CD4-positive, alpha-beta T cell (primary cell): ENCODE measurements at regions of chr9 and their contacts with region 1.

Region 1: GRCh38 chr9:6757456-6758247 is at the start of gene KDM4C:
- DNase-seq: peak; percentile 87 to 98 (median 94)
- ATAC-seq: peak; percentile 70
- H3K4me3 ChIP-seq: peak within 1 kb of the TSS; percentile 90
- H3K4me3 Mint-ChIP-seq: peak within 1 kb of the TSS; percentile 96
- H3K27ac ChIP-seq: peak within 1 kb of the TSS; percentile 96 to 99
- H3K27ac Mint-ChIP-seq: peak within 1 kb of the TSS; percentile 96
- H3K4me1 ChIP-seq: peaks cover 26% of the 10 kb centered on the region
- H3K4me1 Mint-ChIP-seq: peaks cover 25% of the 10 kb centered on the region
- H3K27me3 ChIP-seq: no peaks in the 10 kb centered on the region
- H3K27me3 Mint-ChIP-seq: no peaks in the 10 kb centered on the region
- CTCF ChIP-seq: no peak
- total RNA-seq, gene KDM4C: 60.1 to 61.3 TPM

Region 2: GRCh38 chr9:6645355-6646292 is 112.0 kb before region 1 on chr9 and contains the start of gene GLDC:
- CTCF ChIA-PET with region 1: no interaction called
- POLR2A ChIA-PET with region 1: interaction called, 13 read pairs
- intact Hi-C with region 1: no loop called
- DNase-seq: peak in 12 of 14 experiments; percentile 3 to 64 (median 33)
- ATAC-seq: peak; percentile 68
- H3K4me3 ChIP-seq: peak within 1 kb of the TSS; percentile 66
- H3K4me3 Mint-ChIP-seq: peak within 1 kb of the TSS; percentile 87
- H3K27ac ChIP-seq: no peak within 1 kb of the TSS
- H3K27ac Mint-ChIP-seq: no peak within 1 kb of the TSS
- H3K4me1 ChIP-seq: peaks cover 24% of the 10 kb centered on the region
- H3K4me1 Mint-ChIP-seq: peaks cover 22% of the 10 kb centered on the region
- H3K27me3 ChIP-seq: peaks cover 34 to 41% of the 10 kb centered on the region in 2 experiments
- H3K27me3 Mint-ChIP-seq: peaks cover 68% of the 10 kb centered on the region
- CTCF ChIP-seq: no peak
- total RNA-seq, gene GLDC: not detected

Region 3: GRCh38 chr9:6703898-6704639 is 53.6 kb before region 1 on chr9:
- CTCF ChIA-PET with region 1: interaction called, 3 read pairs
- POLR2A ChIA-PET with region 1: interaction called, 137 read pairs
- intact Hi-C with region 1: loop called (anchors 2 to 5 kb)
- DNase-seq: peak; percentile 72 to 94 (median 81)
- ATAC-seq: peak; percentile 85
- H3K4me3 ChIP-seq: peak overlapping the region; percentile 67
- H3K4me3 Mint-ChIP-seq: peak overlapping the region; percentile 92
- H3K27ac ChIP-seq: peak overlapping the region; percentile 90 to 92
- H3K27ac Mint-ChIP-seq: peak overlapping the region; percentile 91
- H3K4me1 ChIP-seq: peaks cover 16% of the 10 kb centered on the region
- H3K4me1 Mint-ChIP-seq: peaks cover 18% of the 10 kb centered on the region
- H3K27me3 ChIP-seq: no peaks in the 10 kb centered on the region
- H3K27me3 Mint-ChIP-seq: no peaks in the 10 kb centered on the region
- CTCF ChIP-seq: no peak

Region 4: DNA sequence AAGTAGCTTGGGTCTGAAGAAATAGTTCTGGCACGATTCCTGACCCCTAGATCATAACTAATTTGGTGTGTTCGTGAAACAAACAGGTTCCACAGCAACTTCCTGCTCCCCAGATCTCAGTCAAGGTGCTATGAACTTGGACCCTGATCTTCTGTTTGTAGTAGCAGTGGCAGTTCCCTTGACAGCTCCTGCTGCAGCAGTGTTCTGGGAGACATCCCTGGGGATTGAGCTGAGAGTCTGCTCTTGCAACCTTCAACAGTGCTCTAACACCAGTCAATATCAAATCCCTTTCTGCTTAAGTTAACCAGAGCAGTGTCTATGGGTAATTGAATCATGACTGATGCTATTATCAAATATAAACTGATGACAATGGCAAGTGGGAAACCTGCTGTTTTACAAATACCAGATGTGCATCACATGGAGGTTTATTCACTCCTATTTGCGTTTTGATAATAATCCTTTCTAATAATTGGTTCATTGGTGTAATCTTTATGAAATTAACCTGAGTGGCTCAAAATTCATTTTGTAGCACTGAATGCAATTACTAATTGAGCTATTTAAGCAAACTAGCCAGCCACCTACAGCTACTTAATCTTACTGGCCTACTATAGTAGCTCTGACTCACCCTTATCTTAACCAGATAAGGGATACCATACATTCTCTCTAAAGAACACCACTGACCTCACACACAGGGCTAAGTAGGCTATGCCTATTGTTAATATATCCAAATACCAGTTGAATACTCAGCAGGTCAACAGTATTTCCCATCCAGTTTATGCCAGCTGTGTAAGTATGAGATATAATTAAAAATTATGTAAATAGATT is 22.0 kb after region 1 on chr9:
- CTCF ChIA-PET with region 1: interaction called, 3 read pairs
- POLR2A ChIA-PET with region 1: interaction called, 60 read pairs
- intact Hi-C with region 1: no loop called
- DNase-seq: no peak
- ATAC-seq: no peak
- H3K4me3 ChIP-seq: no peak overlapping the region
- H3K4me3 Mint-ChIP-seq: peak overlapping the region; percentile 43
- H3K27ac ChIP-seq: no peak overlapping the region
- H3K27ac Mint-ChIP-seq: peak overlapping the region; percentile 19
- H3K4me1 ChIP-seq: peaks cover 61% of the 10 kb centered on the region
- H3K4me1 Mint-ChIP-seq: peaks cover 82% of the 10 kb centered on the region
- H3K27me3 ChIP-seq: no peaks in the 10 kb centered on the region
- H3K27me3 Mint-ChIP-seq: no peaks in the 10 kb centered on the region
- CTCF ChIP-seq: no peak

Region 5: GRCh38 chr9:6827439-6827838 is 69.8 kb after region 1 on chr9:
- CTCF ChIA-PET with region 1: no interaction called
- POLR2A ChIA-PET with region 1: interaction called, 14 read pairs
- intact Hi-C with region 1: no loop called
- DNase-seq: peak in 6 of 14 experiments; percentile 8 to 62 (median 38)
- ATAC-seq: peak; percentile 54
- H3K4me3 ChIP-seq: no peak overlapping the region
- H3K4me3 Mint-ChIP-seq: no peak overlapping the region
- H3K27ac ChIP-seq: no peak overlapping the region
- H3K27ac Mint-ChIP-seq: peak overlapping the region; percentile 4
- H3K4me1 ChIP-seq: no peaks in the 10 kb centered on the region
- H3K4me1 Mint-ChIP-seq: peaks cover 18% of the 10 kb centered on the region
- H3K27me3 ChIP-seq: no peaks in the 10 kb centered on the region
- H3K27me3 Mint-ChIP-seq: no peaks in the 10 kb centered on the region
- CTCF ChIP-seq: peak; percentile 54